Sciatic nerve (tissue), 2 donors: ENCODE measurements at regions of chr19 and their contacts with region 1.

Region 1: DNA sequence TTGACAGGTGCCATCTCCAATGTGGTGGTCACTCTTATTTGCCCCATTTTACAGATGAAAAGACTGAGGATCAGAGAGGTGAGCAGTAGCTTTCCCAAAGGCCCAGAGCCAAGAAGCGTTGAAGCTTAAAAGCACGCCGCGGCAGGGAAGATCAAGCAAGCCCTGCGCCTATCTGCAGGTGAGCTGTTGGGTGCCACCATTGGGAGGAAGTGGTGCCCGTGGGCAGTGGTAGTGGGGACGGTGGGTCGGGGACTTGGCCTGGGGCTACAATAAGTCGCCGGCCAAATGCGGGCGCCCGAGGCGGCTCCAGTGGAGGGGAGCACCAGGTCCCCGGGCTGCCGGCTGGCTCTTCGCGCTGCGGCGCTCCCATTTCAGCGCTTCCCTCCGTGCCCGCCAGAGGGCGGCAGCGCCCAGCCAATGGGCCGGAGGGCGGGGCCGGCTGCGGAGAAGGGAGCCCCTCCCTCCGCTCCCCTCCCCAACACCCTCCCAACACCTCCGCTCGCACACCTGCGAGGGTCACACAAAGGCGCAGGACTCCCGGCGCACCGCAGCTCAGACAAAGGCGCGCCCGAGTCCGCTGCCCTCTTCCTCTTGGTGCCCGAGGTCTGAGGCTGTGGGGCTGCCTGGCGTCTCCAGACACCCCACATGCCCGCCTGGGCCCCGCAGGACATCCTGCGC is 744 bp upstream of the POU2F2 start:
- DNase-seq: peak; percentile 85
- ATAC-seq: peak; percentile 78

Region 2: DNA sequence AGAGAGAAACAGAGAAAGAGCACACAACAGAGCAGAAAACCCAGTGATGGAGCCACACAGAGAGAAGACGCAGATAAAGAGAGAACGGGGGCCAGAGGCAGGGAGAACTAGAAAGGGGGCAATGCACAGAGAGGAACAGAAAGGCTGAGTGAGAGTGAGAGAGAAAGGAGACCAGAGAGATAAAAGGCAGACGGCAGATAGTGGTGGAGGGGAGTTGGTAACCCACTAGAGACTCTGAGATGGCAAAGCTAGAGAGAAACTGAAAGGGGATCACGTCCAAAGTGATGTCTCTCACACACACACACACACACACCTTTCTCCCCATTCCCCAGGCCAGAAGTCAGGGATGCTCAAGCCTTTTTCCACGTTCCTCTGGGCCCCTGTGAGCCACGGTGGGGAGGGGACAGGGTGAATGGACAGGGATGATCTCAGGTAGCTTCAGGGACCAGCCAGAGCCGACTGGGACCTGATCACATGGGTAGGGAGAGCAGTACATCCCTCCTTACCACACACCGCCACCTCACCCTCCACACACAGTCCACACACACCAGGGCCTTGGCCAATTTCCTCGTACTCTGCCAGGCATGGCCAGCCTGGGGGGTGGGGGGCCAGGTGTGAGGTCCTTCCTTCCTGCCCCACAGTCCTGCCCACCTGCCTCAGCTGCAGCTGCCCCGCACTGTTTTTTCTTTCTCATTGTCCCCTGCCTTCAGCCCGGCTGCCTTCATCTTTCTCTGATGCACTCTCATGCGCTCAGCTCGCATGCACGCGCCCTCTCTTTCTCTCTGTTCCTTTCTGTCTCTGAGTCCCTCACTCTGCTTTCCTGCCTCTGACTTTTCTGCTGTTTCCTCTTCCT is 21.7 kb after region 1 on chr19:
- intact Hi-C with region 1: no loop called
- DNase-seq: no peak
- ATAC-seq: no peak

Region 3: GRCh38 chr19:42166316-42166715 is 33.3 kb after region 1 on chr19:
- intact Hi-C with region 1: no loop called
- DNase-seq: no peak
- ATAC-seq: no peak

Region 4: DNA sequence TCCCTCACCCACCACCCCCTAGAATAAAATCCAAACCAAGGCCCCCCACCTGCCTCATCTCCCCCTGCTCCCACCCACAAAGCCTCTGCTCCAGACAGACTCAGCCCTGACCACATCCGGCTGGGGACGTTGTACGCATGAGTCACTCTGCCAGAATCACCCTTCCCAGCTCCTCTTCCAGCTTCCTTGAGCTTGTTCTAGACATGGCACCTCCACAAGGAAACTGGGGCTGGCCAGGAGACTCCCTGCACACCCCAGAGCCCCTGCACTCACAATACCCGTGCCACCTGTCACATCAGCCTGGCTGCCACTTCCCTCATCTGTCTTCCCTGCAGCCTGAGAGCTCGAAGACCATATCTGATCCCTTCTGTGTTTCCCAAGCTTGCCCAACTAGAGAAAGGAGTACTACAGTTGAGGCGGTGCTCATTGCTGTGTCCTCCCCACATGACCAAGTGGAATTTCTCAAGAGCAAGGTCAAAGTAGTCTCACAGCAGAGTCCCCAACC is 74.8 kb after region 1 on chr19:
- intact Hi-C with region 1: no loop called
- DNase-seq: no peak
- ATAC-seq: no peak

Region 5: DNA sequence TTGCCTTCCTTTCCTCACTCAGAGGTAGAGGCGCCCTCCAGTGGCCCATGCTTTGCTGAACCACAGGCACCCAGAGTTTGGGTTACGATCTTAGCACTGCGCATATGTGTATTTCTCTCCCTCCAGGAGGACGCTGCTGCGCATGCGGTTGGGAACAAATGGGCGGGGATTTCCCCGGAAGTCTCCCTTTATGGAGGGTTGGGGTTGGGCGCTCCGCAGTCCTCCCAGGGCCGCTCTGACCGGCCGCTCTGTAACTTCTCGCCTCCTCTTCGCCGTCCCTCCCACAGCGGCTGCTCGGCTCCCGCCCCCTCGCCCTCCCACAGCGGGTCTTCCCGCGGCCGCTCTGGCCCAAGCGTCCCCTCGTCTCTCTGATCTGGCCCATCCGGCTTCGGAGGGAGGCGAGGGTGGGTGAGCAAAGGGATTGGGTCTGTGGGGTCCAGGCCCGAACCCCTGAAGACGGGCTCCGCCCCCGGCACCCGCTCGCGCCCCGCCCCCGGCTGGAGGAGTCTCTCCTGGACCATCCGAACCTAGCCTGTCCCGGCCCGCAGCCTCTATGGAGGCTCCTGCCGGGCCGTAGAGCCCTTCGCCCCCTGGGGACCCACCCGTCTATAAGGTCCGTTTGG is 192.4 kb after region 1 on chr19 and contains the start of gene MEGF8:
- intact Hi-C with region 1: loop called (anchors 10 kb)
- DNase-seq: peak; percentile 99
- ATAC-seq: peak; percentile 98
- total RNA-seq, gene MEGF8: 35.1 TPM